Transverse colon (tissue), 4 donors: ENCODE measurements at regions of chr11 and their contacts with region 1.

Region 1: DNA sequence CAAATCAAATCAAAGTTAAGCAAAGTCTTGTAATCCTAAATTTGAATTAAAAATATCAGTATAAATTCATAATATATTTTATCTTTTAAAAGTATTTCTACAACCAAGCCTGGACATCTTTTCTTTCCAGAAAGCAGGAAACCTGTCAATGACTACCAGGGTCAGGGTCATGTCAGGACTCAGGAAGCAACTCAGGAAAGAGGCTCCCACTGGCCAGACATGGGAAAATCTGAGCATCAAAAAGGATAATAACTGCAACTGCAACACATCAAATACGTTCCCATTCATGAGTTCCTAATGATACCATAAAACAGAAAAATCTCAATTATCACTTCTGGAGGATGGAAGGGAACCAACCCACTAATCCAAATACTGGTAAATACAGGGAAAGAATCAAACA is 76.0 kb upstream of the GALNT18 start:
- DNase-seq: no peak
- H3K4me3 ChIP-seq: no peak overlapping the region
- H3K27ac ChIP-seq: no peak overlapping the region
- H3K4me1 ChIP-seq: no peaks in the 10 kb centered on the region
- H3K27me3 ChIP-seq: no peaks in the 10 kb centered on the region
- CTCF ChIP-seq: no peak
- EP300 ChIP-seq: no peak
- POLR2A ChIP-seq: no peak

Region 2: DNA sequence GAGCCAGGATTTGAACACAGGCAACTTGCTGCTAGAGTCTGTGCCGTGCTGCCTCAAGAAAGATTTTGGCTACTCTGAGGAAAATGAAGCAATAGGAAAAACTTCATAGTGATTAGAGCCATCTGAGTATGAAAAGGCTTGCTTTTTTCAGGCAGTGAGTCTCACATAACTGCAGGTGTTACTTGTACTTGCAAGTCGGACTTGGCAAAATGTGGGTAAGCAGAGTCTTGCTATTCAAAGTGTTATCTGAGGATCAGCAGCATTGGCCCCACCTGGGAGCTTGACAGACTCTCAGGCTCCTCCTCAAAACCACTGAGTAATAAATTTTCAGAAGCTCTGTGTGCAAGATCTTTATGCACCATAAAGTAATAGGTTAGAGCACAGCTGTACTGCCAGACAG is 1174.9 kb before region 1 on chr11:
- in situ Hi-C with region 1: no loop called
- intact Hi-C with region 1: loop called (anchors 5 kb)
- DNase-seq: no peak
- H3K4me3 ChIP-seq: no peak overlapping the region
- H3K27ac ChIP-seq: peak overlapping the region in 1 of 4 donors; percentile 18
- H3K4me1 ChIP-seq: peaks cover 0 to 9% (median 2%) of the 10 kb centered on the region in 4 donors
- H3K27me3 ChIP-seq: no peaks in the 10 kb centered on the region
- CTCF ChIP-seq: no peak
- EP300 ChIP-seq: no peak
- POLR2A ChIP-seq: no peak

Region 3: DNA sequence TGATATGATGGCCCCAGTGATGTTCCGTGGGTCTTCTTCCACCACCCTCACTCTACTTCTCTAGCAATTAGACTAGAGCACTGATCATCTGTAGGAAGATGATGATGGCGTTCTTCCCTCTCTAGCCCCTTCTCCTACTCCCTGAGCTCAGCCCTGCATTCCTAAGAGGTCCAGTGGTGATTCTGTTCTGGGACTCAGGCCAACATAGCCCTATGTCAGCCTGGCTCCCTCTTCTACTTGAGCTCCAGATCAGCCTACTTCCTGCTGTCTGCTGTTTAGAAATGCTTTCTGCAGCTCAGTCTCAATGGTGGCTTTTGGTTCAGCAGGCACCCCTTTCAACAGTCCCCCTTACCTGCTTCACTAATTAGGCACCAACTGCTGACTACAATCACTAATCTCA is 753.8 kb before region 1 on chr11:
- in situ Hi-C with region 1: no loop called
- intact Hi-C with region 1: no loop called
- DNase-seq: no peak
- H3K4me3 ChIP-seq: no peak overlapping the region
- H3K27ac ChIP-seq: no peak overlapping the region
- H3K4me1 ChIP-seq: peaks cover 0 to 16% (median 8%) of the 10 kb centered on the region in 4 donors
- H3K27me3 ChIP-seq: no peaks in the 10 kb centered on the region
- CTCF ChIP-seq: no peak
- EP300 ChIP-seq: no peak
- POLR2A ChIP-seq: no peak

Region 4: GRCh38 chr11:11748706-11749365 is 51.0 kb after region 1 on chr11:
- in situ Hi-C with region 1: no loop called
- intact Hi-C with region 1: no loop called
- DNase-seq: no peak
- H3K4me3 ChIP-seq: no peak overlapping the region
- H3K27ac ChIP-seq: no peak overlapping the region
- H3K4me1 ChIP-seq: no peaks in the 10 kb centered on the region
- H3K27me3 ChIP-seq: no peaks in the 10 kb centered on the region
- CTCF ChIP-seq: no peak
- EP300 ChIP-seq: no peak
- POLR2A ChIP-seq: no peak